Activated CD4-positive, alpha-beta T cell treated with anti-CD3 and anti-CD28 coated beads for 36 hours (primary cell): ENCODE measurements at regions of chr1 and their contacts with region 1.

Region 1: GRCh38 chr1:33080885-33081553 is at the start of gene AZIN2:
- DNase-seq: peak; percentile 98
- ATAC-seq: peak; percentile 100
- H3K4me3 Mint-ChIP-seq: peak within 1 kb of the TSS; percentile 61
- H3K27ac Mint-ChIP-seq: peak within 1 kb of the TSS; percentile 43
- H3K4me1 Mint-ChIP-seq: peaks cover 17% of the 10 kb centered on the region
- H3K27me3 Mint-ChIP-seq: peaks cover 3% of the 10 kb centered on the region
- total RNA-seq, gene AZIN2: 0.98 to 2.1 TPM

Region 2: DNA sequence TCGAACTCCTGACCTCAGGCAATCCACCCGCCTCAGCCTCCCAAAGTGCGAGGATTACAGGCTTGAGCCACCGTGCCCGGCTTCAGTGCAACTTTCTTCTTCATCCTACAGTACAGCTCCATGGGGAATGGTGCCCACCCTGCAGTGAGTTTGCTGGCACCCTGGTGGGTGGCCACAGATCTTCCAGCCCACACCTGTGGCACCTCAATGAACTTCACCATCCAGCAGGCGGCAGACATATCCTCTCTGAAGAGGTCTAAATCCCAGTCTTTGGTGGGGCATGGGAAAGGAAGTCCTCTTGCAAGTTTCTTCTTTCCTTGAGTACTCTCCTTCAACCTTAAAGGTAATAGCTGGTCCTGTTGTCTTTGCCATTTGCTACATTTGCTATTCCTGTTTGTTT is 559.9 kb before region 1 on chr1:
- CTCF ChIA-PET with region 1: no interaction called
- POLR2A ChIA-PET with region 1: no interaction called
- intact Hi-C with region 1: no loop called
- DNase-seq: peak; percentile 7
- ATAC-seq: no peak
- H3K4me3 Mint-ChIP-seq: peak overlapping the region; percentile 64
- H3K27ac Mint-ChIP-seq: no peak overlapping the region
- H3K4me1 Mint-ChIP-seq: peaks cover 6% of the 10 kb centered on the region
- H3K27me3 Mint-ChIP-seq: peaks cover 6% of the 10 kb centered on the region

Region 3: GRCh38 chr1:32939655-32940371 is 141.2 kb before region 1 on chr1:
- CTCF ChIA-PET with region 1: interaction called, 53 read pairs
- POLR2A ChIA-PET with region 1: no interaction called
- intact Hi-C with region 1: loop called in 1 of 2 experiments (anchors 10 kb)
- DNase-seq: peak; percentile 54
- ATAC-seq: peak; percentile 73
- H3K4me3 Mint-ChIP-seq: no peak overlapping the region
- H3K27ac Mint-ChIP-seq: peak overlapping the region; percentile 45
- H3K4me1 Mint-ChIP-seq: peaks cover 29% of the 10 kb centered on the region
- H3K27me3 Mint-ChIP-seq: no peaks in the 10 kb centered on the region

Region 4: GRCh38 chr1:33036526-33037503 is 44.2 kb before region 1 on chr1 and contains the start of gene AK2:
- CTCF ChIA-PET with region 1: no interaction called
- POLR2A ChIA-PET with region 1: no interaction called
- intact Hi-C with region 1: loop called (anchors 1 kb)
- DNase-seq: peak; percentile 96
- ATAC-seq: peak; percentile 100
- H3K4me3 Mint-ChIP-seq: peak within 1 kb of the TSS; percentile 96
- H3K27ac Mint-ChIP-seq: peak within 1 kb of the TSS; percentile 87
- H3K4me1 Mint-ChIP-seq: peaks cover 41% of the 10 kb centered on the region
- H3K27me3 Mint-ChIP-seq: no peaks in the 10 kb centered on the region
- total RNA-seq, gene AK2: 386 to 464 TPM

Region 5: GRCh38 chr1:33094971-33095604 is 14.1 kb after region 1 on chr1:
- CTCF ChIA-PET with region 1: interaction called, 37 read pairs
- POLR2A ChIA-PET with region 1: interaction called, 3 read pairs
- intact Hi-C with region 1: loop called in 1 of 2 experiments (anchors 1 kb)
- DNase-seq: peak; percentile 44
- ATAC-seq: no peak
- H3K4me3 Mint-ChIP-seq: no peak overlapping the region
- H3K27ac Mint-ChIP-seq: no peak overlapping the region
- H3K4me1 Mint-ChIP-seq: peaks cover 27% of the 10 kb centered on the region
- H3K27me3 Mint-ChIP-seq: no peaks in the 10 kb centered on the region

Region 6: GRCh38 chr1:33181921-33182341 is 100.9 kb after region 1 on chr1 and contains the start of gene TRIM62:
- CTCF ChIA-PET with region 1: no interaction called
- POLR2A ChIA-PET with region 1: no interaction called
- intact Hi-C with region 1: loop called in 1 of 2 experiments (anchors 1 kb)
- DNase-seq: peak; percentile 84
- ATAC-seq: peak; percentile 35
- H3K4me3 Mint-ChIP-seq: peak within 1 kb of the TSS; percentile 79
- H3K27ac Mint-ChIP-seq: peak within 1 kb of the TSS; percentile 74
- H3K4me1 Mint-ChIP-seq: peaks cover 25% of the 10 kb centered on the region
- H3K27me3 Mint-ChIP-seq: peaks cover 5% of the 10 kb centered on the region
- total RNA-seq, gene TRIM62: 3.6 to 3.7 TPM

Region 7: GRCh38 chr1:33443080-33443704 is 362.2 kb after region 1 on chr1:
- CTCF ChIA-PET with region 1: no interaction called
- POLR2A ChIA-PET with region 1: no interaction called
- intact Hi-C with region 1: no loop called
- DNase-seq: no peak
- ATAC-seq: no peak
- H3K4me3 Mint-ChIP-seq: no peak overlapping the region
- H3K27ac Mint-ChIP-seq: no peak overlapping the region
- H3K4me1 Mint-ChIP-seq: no peaks in the 10 kb centered on the region
- H3K27me3 Mint-ChIP-seq: peaks cover 13% of the 10 kb centered on the region